Activated B cell treated with CpG ODN at 0.5 μM for 24 hours (primary cell): ENCODE measurements at regions of chr17 and their contacts with region 1.

Region 1: GRCh38 chr17:17041571-17042380 is 481 bp upstream of the MPRIP start:
- DNase-seq: peak; percentile 94
- ATAC-seq: peak; percentile 93
- H3K4me3 Mint-ChIP-seq: peak overlapping the region; percentile 69
- H3K27ac Mint-ChIP-seq: no peak overlapping the region
- H3K4me1 Mint-ChIP-seq: peaks cover 48% of the 10 kb centered on the region
- H3K27me3 Mint-ChIP-seq: no peaks in the 10 kb centered on the region
- CTCF ChIP-seq: no peak

Region 2: DNA sequence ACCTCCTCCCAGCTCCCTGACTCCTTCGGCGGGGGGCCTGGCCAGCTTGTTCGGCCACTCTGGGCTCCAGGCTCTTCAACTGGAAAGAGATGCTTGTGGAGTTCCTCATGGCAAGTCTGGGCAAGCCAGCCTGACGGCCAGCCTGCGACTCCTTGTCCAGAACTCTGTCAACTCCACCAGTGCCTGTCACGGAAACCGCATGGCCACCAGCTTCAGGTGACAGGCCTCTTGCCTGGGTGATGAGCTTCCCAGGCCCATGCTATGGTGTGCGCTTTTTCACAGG is 21.7 kb before region 1 on chr17:
- CTCF ChIA-PET with region 1: no interaction called
- POLR2A ChIA-PET with region 1: interaction called, 11 read pairs
- intact Hi-C with region 1: no loop called
- DNase-seq: no peak
- ATAC-seq: no peak
- H3K4me3 Mint-ChIP-seq: no peak overlapping the region
- H3K27ac Mint-ChIP-seq: no peak overlapping the region
- H3K4me1 Mint-ChIP-seq: peaks cover 20% of the 10 kb centered on the region
- H3K27me3 Mint-ChIP-seq: no peaks in the 10 kb centered on the region
- CTCF ChIP-seq: no peak

Region 3: GRCh38 chr17:17823433-17824118 is 781.8 kb after region 1 on chr17:
- CTCF ChIA-PET with region 1: no interaction called
- POLR2A ChIA-PET with region 1: no interaction called
- intact Hi-C with region 1: loop called (anchors 5 kb)
- DNase-seq: peak; percentile 71
- ATAC-seq: peak; percentile 88
- H3K4me3 Mint-ChIP-seq: peak overlapping the region; percentile 78
- H3K27ac Mint-ChIP-seq: peak overlapping the region; percentile 30
- H3K4me1 Mint-ChIP-seq: peaks cover 62% of the 10 kb centered on the region
- H3K27me3 Mint-ChIP-seq: no peaks in the 10 kb centered on the region
- CTCF ChIP-seq: no peak